ENCODE measurements at regions of chr12 and their contacts with region 1.

Region 1: DNA sequence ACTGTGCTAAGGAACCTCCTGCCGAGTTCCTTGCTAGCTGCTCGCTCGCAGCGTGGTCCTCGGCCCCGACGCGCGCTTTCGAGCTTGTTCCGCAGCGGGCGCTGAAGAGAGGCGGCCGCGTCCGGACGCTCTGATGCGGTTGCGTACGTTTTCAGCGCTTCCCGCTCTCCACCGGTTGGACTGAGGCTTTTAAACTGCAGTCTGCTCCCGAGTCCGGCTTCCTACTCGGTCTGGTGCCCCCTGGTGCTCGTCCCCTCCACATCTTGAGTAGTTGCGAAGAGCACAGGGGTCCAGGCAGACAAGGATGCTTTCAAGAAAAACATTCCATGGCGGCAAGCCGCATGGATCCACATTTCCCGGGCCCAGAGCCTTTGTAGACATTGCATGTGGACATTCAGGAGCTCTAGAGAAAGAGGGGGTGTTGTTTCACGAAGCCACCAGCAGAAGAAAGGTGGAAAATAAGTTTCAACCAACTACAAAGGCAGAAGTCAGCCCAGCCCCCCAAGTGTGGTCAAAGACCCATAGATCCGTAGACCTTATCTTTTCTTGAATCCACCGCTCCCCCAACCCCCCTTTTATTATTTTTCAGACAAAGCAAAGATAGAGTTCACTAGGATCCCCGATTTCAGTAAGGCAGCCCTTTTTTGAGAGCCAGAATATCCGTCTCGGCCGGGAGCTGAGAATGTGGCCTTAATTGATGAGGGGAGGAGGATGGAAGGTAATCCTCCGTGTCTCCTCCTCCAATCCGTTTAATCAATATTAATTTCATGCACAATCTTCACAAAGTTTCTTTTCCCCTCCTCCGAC is 984 bp upstream of the WNK1 start:
- DNase-seq: peak; percentile 61 to 95 (median 82)
- ATAC-seq: peak; percentile 21
- H3K4me3 ChIP-seq: peak overlapping the region; percentile 58 to 88
- H3K4me3 Mint-ChIP-seq: no peak overlapping the region
- H3K27ac ChIP-seq: peak overlapping the region; percentile 68 to 76
- H3K27ac Mint-ChIP-seq: no peak overlapping the region
- H3K4me1 ChIP-seq: peaks cover 25% of the 10 kb centered on the region
- H3K4me1 Mint-ChIP-seq: peaks cover 20% of the 10 kb centered on the region
- H3K27me3 ChIP-seq: no peaks in the 10 kb centered on the region
- H3K27me3 Mint-ChIP-seq: no peaks in the 10 kb centered on the region
- CTCF ChIP-seq: peak; percentile 48

Region 2: GRCh38 chr12:389139-390096 is 362.0 kb before region 1 on chr12 and contains the start of gene KDM5A:
- CTCF ChIA-PET with region 1: no interaction called
- POLR2A ChIA-PET with region 1: interaction called, 3 read pairs
- intact Hi-C with region 1: loop called (anchors 5 kb)
- DNase-seq: peak; percentile 78 to 96 (median 90)
- ATAC-seq: peak; percentile 90
- H3K4me3 ChIP-seq: peak within 1 kb of the TSS; percentile 91 to 96
- H3K4me3 Mint-ChIP-seq: peak within 1 kb of the TSS; percentile 93
- H3K27ac ChIP-seq: peak within 1 kb of the TSS; percentile 90 to 94
- H3K27ac Mint-ChIP-seq: peak within 1 kb of the TSS; percentile 98
- H3K4me1 ChIP-seq: peaks cover 39% of the 10 kb centered on the region
- H3K4me1 Mint-ChIP-seq: peaks cover 38% of the 10 kb centered on the region
- H3K27me3 ChIP-seq: no peaks in the 10 kb centered on the region
- H3K27me3 Mint-ChIP-seq: no peaks in the 10 kb centered on the region
- CTCF ChIP-seq: no peak
- total RNA-seq, gene KDM5A: 144 to 145 TPM

Region 3: DNA sequence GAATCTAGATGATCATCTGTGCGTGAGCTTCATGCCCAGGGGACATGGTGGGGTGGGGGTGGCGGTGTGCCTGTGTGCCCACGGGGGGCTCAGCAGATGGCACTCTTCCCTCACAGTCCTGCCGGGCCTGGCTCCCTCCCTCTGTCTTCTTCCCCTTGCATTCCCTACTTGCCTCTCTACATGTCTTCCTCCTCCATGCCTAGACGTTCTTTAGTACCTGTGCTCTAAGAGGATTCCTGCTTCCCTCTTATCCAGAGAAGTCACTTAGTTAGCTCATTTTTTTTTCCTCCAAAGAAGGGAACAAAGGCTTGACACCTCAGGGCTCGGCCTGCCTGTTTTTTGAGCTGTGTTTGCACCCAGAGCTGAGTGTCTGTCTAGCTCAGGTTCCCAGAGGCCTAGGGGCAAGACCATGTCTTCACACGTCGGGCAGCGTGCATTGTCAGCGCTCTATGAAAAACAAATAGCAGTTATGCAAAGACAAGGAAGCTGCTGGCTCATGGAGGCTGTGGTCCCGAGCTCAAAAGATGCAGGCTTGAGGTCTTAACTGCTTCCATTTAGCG is 136.9 kb before region 1 on chr12:
- CTCF ChIA-PET with region 1: interaction called, 41 read pairs
- POLR2A ChIA-PET with region 1: interaction called, 8 read pairs
- intact Hi-C with region 1: loop called in 1 of 2 experiments (anchors 2 kb)
- DNase-seq: peak in 8 of 9 experiments; percentile 15 to 60 (median 46)
- ATAC-seq: peak; percentile 41
- H3K4me3 ChIP-seq: no peak overlapping the region
- H3K4me3 Mint-ChIP-seq: no peak overlapping the region
- H3K27ac ChIP-seq: no peak overlapping the region
- H3K27ac Mint-ChIP-seq: no peak overlapping the region
- H3K4me1 ChIP-seq: peaks cover 19% of the 10 kb centered on the region
- H3K4me1 Mint-ChIP-seq: peaks cover 32% of the 10 kb centered on the region
- H3K27me3 ChIP-seq: no peaks in the 10 kb centered on the region
- H3K27me3 Mint-ChIP-seq: no peaks in the 10 kb centered on the region
- CTCF ChIP-seq: no peak

Region 4: DNA sequence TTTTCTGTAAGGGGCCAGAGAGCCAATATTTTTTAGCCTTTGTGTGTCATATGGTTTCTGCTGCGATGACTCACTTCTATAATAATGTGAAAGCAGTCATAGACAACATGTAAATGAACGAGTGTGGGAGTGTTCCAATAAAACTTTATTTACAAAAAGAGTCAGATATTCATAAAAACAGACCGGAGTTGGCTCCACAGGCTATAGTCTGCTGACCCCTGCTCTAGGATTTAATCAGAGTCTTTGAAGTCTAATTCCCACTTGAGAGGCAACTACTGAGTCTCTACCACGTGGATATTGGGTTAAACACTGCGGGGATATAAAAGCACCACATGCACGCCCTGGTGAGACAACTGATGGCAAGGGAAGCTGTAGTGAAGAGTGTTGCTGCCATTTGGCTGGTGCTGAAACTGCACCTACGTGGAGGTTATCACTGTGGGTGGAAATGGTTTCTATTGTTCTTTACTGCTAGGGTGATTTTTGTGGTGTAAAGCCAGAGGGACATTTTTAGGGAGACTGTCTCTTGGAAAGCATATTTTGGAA is 84.6 kb before region 1 on chr12:
- CTCF ChIA-PET with region 1: interaction called, 26 read pairs
- POLR2A ChIA-PET with region 1: interaction called, 5 read pairs
- intact Hi-C with region 1: no loop called
- DNase-seq: peak in 2 of 9 experiments; percentile 61
- ATAC-seq: peak; percentile 39
- H3K4me3 ChIP-seq: no peak overlapping the region
- H3K4me3 Mint-ChIP-seq: peak overlapping the region; percentile 18
- H3K27ac ChIP-seq: no peak overlapping the region
- H3K27ac Mint-ChIP-seq: peak overlapping the region; percentile 3
- H3K4me1 ChIP-seq: peaks cover 37% of the 10 kb centered on the region
- H3K4me1 Mint-ChIP-seq: peaks cover 58% of the 10 kb centered on the region
- H3K27me3 ChIP-seq: no peaks in the 10 kb centered on the region
- H3K27me3 Mint-ChIP-seq: no peaks in the 10 kb centered on the region
- CTCF ChIP-seq: no peak

Region 5: DNA sequence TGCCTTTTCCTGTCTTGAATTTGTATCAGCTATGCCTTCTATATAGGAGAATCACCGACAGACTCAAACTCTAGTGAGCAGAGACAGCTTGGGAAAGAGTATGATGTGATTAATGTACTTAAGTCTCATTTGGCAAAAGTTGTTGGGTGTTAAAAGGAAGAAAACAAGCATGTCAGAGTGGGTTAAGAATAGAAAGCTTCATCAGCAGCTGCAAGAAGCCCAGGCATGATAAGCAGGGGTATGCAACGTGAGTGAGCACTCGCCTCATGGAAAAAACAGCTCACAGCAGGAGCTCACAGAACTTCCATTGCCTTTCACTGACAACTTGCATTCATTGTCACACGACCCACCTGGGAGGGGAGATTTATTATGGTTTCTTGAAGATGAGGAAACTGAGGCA is 34.9 kb before region 1 on chr12:
- CTCF ChIA-PET with region 1: interaction called, 5 read pairs
- POLR2A ChIA-PET with region 1: no interaction called
- intact Hi-C with region 1: loop called in 1 of 2 experiments (anchors 5 kb)
- DNase-seq: no peak
- ATAC-seq: no peak
- H3K4me3 ChIP-seq: no peak overlapping the region
- H3K4me3 Mint-ChIP-seq: no peak overlapping the region
- H3K27ac ChIP-seq: no peak overlapping the region
- H3K27ac Mint-ChIP-seq: no peak overlapping the region
- H3K4me1 ChIP-seq: peaks cover 14% of the 10 kb centered on the region
- H3K4me1 Mint-ChIP-seq: peaks cover 28% of the 10 kb centered on the region
- H3K27me3 ChIP-seq: no peaks in the 10 kb centered on the region
- H3K27me3 Mint-ChIP-seq: no peaks in the 10 kb centered on the region
- CTCF ChIP-seq: no peak

Region 6: DNA sequence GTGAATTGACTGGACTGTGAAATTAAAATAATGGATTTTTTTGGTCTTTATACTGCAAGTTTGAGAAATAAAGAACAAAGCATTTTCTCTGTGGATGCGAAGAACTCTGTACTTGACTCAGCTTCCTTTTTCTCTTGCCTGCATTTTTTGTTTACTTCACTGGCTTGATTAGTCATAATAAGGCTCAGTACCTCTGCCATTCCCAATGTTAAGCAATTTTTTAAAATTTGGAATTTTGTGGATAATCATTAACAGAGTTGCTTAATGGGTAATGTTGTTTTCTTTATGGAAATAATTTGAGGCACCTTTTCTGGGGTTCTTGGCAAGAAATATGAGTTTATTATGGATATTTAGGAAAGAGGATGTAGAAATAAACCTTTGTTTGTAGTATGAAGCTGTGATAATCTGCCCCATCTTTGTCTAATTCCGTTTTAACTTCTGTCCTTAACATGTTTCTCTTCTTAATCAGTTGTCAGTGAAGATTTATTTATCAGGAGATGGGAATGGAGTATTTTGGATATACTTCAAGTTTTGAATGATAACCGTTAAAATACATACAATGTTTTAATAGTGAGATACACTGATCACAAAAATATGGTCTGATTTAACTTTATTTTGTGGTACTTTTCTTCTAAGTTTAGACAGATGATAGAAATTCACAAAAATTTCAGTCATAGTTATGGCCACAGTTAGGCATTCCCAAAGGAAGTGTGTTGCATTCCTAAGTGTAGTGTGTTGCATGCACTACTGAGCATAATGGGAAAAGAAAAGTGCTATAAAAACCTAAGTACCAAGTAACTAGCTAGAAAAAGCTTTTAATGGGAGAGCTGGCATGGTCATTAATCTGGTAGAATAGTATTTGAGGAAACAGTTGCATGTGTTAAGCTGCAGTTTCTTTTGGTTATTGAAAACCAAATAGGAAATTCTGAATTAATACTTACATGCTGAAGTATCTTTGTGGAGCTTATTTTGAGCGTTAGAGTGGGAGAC is 28.6 kb after region 1 on chr12:
- CTCF ChIA-PET with region 1: interaction called, 4 read pairs
- POLR2A ChIA-PET with region 1: interaction called, 31 read pairs
- intact Hi-C with region 1: loop called (anchors 2 kb)
- DNase-seq: peak in 1 of 9 experiments; percentile 31
- ATAC-seq: peak; percentile 56
- H3K4me3 ChIP-seq: no peak overlapping the region
- H3K4me3 Mint-ChIP-seq: peak overlapping the region; percentile 70
- H3K27ac ChIP-seq: no peak overlapping the region
- H3K27ac Mint-ChIP-seq: peak overlapping the region; percentile 5
- H3K4me1 ChIP-seq: peaks cover 34% of the 10 kb centered on the region
- H3K4me1 Mint-ChIP-seq: peaks cover 70% of the 10 kb centered on the region
- H3K27me3 ChIP-seq: no peaks in the 10 kb centered on the region
- H3K27me3 Mint-ChIP-seq: no peaks in the 10 kb centered on the region
- CTCF ChIP-seq: no peak

Region 7: GRCh38 chr12:835754-836518 is 84.5 kb after region 1 on chr12:
- CTCF ChIA-PET with region 1: no interaction called
- POLR2A ChIA-PET with region 1: no interaction called
- intact Hi-C with region 1: no loop called
- DNase-seq: no peak
- ATAC-seq: no peak
- H3K4me3 ChIP-seq: no peak overlapping the region
- H3K4me3 Mint-ChIP-seq: no peak overlapping the region
- H3K27ac ChIP-seq: no peak overlapping the region
- H3K27ac Mint-ChIP-seq: peak overlapping the region; percentile 49
- H3K4me1 ChIP-seq: no peaks in the 10 kb centered on the region
- H3K4me1 Mint-ChIP-seq: peaks cover 46% of the 10 kb centered on the region
- H3K27me3 ChIP-seq: no peaks in the 10 kb centered on the region
- H3K27me3 Mint-ChIP-seq: no peaks in the 10 kb centered on the region
- CTCF ChIP-seq: no peak

Region 8: DNA sequence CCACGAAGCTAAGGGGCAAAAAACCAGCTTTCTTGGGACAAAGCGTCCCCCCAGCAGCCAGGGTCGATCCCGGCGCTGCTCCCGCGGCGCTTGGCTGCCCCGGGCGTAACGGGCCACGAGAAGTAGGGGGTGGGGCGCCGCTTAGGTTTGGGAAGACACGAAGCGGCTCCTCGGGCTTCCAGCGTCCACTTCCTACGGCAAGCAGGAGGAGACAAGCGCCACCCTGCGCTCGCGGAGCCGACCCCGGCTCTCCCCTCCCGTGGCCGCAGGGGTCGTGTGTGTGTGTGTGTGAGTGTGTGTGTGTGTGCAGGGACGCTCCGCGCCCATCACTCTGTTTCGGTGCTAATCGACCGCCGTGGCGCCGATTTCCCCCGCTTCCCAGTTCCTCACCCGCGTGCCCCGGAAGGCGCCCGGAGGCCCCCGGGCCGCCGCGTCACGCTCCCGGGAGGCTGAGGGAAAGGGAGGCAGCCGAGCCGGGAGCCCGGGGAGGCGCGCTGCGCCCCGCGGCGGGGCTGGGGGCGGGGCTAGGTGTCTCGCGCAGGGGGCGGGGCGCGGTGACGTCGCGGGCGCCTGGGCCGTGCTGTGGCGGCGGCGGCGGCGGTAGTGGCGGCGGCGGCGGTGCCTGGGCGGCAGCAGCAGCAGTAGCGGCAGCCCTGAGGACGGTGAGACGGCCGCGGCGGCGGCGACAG is 239.4 kb after region 1 on chr12 and contains the start of gene ERC1:
- CTCF ChIA-PET with region 1: no interaction called
- POLR2A ChIA-PET with region 1: interaction called, 3 read pairs
- intact Hi-C with region 1: loop called (anchors 5 to 10 kb)
- DNase-seq: peak; percentile 71 to 92 (median 80)
- ATAC-seq: peak; percentile 83
- H3K4me3 ChIP-seq: peak within 1 kb of the TSS; percentile 68 to 98
- H3K4me3 Mint-ChIP-seq: peak within 1 kb of the TSS; percentile 94
- H3K27ac ChIP-seq: peak within 1 kb of the TSS; percentile 78 to 82
- H3K27ac Mint-ChIP-seq: peak within 1 kb of the TSS; percentile 95
- H3K4me1 ChIP-seq: peaks cover 27% of the 10 kb centered on the region
- H3K4me1 Mint-ChIP-seq: peaks cover 50% of the 10 kb centered on the region
- H3K27me3 ChIP-seq: no peaks in the 10 kb centered on the region
- H3K27me3 Mint-ChIP-seq: no peaks in the 10 kb centered on the region
- CTCF ChIP-seq: no peak
- total RNA-seq, gene ERC1: 34.5 to 34.6 TPM

Region 9: DNA sequence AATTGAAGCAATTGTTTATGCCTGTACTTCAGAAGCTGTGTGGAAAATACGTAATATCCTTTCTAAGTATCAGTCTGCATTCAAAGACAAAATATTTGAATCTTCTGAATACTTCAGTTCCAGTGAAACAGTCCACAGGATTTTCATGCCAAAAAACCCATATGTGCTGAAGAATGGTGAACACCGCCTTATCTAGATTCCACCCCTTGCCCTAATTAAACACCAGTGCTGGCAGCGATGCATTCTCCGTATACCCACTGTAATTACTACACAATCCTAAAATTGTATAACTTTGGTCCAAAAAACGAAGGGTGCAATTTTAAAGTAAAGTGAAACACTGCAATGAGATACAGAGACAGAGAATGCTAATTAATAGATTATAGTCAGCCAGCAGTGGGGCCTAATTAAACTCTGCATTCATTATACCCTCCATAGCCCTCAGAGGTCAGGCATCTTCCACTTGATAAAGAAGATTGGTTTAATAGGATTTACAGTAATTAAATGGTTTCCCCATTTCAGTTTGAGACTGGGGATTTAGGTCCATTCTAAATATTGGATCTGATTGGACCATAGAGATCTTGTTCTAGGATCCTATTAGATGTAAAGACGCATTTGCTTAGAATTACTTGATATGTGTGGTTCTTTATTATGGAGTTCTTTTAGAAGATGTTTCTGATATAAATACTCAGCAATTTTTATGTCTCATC is 283.5 kb after region 1 on chr12:
- CTCF ChIA-PET with region 1: no interaction called
- POLR2A ChIA-PET with region 1: no interaction called
- intact Hi-C with region 1: no loop called
- DNase-seq: no peak
- ATAC-seq: no peak
- H3K4me3 ChIP-seq: no peak overlapping the region
- H3K4me3 Mint-ChIP-seq: no peak overlapping the region
- H3K27ac ChIP-seq: no peak overlapping the region
- H3K27ac Mint-ChIP-seq: no peak overlapping the region
- H3K4me1 ChIP-seq: no peaks in the 10 kb centered on the region
- H3K4me1 Mint-ChIP-seq: peaks cover 2% of the 10 kb centered on the region
- H3K27me3 ChIP-seq: no peaks in the 10 kb centered on the region
- H3K27me3 Mint-ChIP-seq: no peaks in the 10 kb centered on the region
- CTCF ChIP-seq: no peak

Region 10: GRCh38 chr12:1162081-1162760 is 410.8 kb after region 1 on chr12:
- CTCF ChIA-PET with region 1: no interaction called
- POLR2A ChIA-PET with region 1: no interaction called
- intact Hi-C with region 1: no loop called
- DNase-seq: no peak
- ATAC-seq: no peak
- H3K4me3 ChIP-seq: no peak overlapping the region
- H3K4me3 Mint-ChIP-seq: no peak overlapping the region
- H3K27ac ChIP-seq: no peak overlapping the region
- H3K27ac Mint-ChIP-seq: no peak overlapping the region
- H3K4me1 ChIP-seq: no peaks in the 10 kb centered on the region
- H3K4me1 Mint-ChIP-seq: peaks cover 12% of the 10 kb centered on the region
- H3K27me3 ChIP-seq: no peaks in the 10 kb centered on the region
- H3K27me3 Mint-ChIP-seq: no peaks in the 10 kb centered on the region
- CTCF ChIP-seq: no peak